A673 (cell line): ENCODE measurements at regions of chr6 and their contacts with region 1.

Region 1: GRCh38 chr6:52407467-52407866 is 12.7 kb upstream of the EFHC1 start:
- DNase-seq: peak; percentile 77
- H3K4me3 ChIP-seq: no peak overlapping the region
- H3K27ac ChIP-seq: no peak overlapping the region
- H3K4me1 ChIP-seq: no peaks in the 10 kb centered on the region
- H3K27me3 ChIP-seq: no peaks in the 10 kb centered on the region
- CTCF ChIP-seq: peak; percentile 69

Region 2: DNA sequence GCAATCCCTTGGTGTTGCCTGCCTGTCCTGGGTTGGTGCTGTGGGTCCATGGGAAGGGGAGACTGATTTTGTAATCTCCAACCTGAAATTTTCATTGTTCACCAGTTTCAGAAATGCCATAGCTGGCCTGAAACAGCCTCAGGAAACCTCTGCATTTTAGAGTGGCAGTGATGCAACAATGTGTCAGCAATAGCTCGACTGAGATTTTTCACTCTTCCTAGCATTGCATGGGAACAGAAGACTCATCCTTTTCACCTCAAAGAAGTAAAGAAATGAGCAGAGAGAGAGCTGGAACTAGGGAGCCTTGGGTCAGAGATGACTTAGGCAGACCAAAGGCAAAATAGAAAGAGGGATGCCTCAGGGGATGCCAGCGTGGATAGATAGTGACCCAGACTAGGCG is 239.7 kb after region 1 on chr6:
- CTCF ChIA-PET with region 1: interaction called, 23 read pairs
- POLR2A ChIA-PET with region 1: interaction called, 3 read pairs
- intact Hi-C with region 1: no loop called
- DNase-seq: no peak
- H3K4me3 ChIP-seq: no peak overlapping the region
- H3K27ac ChIP-seq: no peak overlapping the region
- H3K4me1 ChIP-seq: peaks cover 12% of the 10 kb centered on the region
- H3K27me3 ChIP-seq: peaks cover 6% of the 10 kb centered on the region
- CTCF ChIP-seq: no peak

Region 3: DNA sequence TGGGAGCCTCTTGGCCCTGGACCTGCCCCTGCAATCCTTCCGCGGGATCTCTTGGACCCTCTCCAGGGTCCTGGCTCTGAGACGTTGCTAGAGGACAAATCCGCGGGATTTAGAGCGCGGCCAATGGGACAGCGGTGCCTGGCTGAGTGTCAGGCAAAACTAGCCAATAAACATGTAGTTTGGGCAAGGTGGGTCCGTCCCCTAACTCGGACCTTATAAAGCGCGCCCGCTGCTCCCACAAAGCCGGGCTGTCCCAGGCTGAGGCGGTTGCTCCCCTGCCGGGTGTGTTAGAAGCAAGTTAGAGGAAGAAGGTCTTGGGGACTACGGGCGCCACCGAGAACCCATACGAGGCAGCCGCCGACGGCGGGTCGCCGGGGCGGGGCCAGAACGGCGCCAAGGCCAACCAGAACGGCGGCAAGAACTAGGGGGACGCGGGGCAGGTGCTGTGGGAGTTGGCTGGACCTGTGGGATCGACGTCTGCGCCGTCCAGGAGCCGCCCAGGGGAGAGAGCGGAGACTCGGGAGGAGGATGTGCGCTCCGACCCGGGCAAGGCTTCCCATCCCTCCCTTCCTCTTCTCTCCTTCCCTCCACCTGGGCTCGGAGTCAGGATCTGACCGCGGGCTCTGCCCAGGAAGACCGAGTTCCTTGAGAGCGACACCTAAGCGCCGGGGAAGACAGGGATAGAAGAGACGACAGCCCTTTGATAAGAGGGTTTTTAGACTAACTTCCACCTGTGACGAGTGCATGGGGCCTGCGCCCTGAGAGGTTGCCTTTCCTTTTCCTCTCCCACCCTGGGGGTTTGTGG is 256.9 kb after region 1 on chr6:
- CTCF ChIA-PET with region 1: interaction called, 10 read pairs
- POLR2A ChIA-PET with region 1: no interaction called
- intact Hi-C with region 1: loop called (anchors 2 kb)
- DNase-seq: peak; percentile 97
- H3K4me3 ChIP-seq: peak overlapping the region; percentile 64
- H3K27ac ChIP-seq: peak overlapping the region; percentile 54
- H3K4me1 ChIP-seq: peaks cover 26% of the 10 kb centered on the region
- H3K27me3 ChIP-seq: no peaks in the 10 kb centered on the region
- CTCF ChIP-seq: no peak

Region 4: GRCh38 chr6:52872031-52872430 is 464.6 kb after region 1 on chr6:
- CTCF ChIA-PET with region 1: interaction called, 13 read pairs
- POLR2A ChIA-PET with region 1: no interaction called
- intact Hi-C with region 1: no loop called
- DNase-seq: no peak
- H3K4me3 ChIP-seq: no peak overlapping the region
- H3K27ac ChIP-seq: no peak overlapping the region
- H3K4me1 ChIP-seq: no peaks in the 10 kb centered on the region
- H3K27me3 ChIP-seq: no peaks in the 10 kb centered on the region
- CTCF ChIP-seq: no peak

Region 5: GRCh38 chr6:53065216-53066076 is 658.0 kb after region 1 on chr6 and contains the start of gene FBXO9:
- CTCF ChIA-PET with region 1: interaction called, 10 read pairs
- POLR2A ChIA-PET with region 1: no interaction called
- intact Hi-C with region 1: no loop called
- DNase-seq: peak; percentile 75
- H3K4me3 ChIP-seq: peak within 1 kb of the TSS; percentile 83
- H3K27ac ChIP-seq: peak within 1 kb of the TSS; percentile 89
- H3K4me1 ChIP-seq: peaks cover 7% of the 10 kb centered on the region
- H3K27me3 ChIP-seq: no peaks in the 10 kb centered on the region
- CTCF ChIP-seq: no peak
- total RNA-seq, gene FBXO9: 76.7 and 82.5 TPM in 2 replicates